WTC11 (cell line): ENCODE measurements at regions of chr16 and their contacts with region 1.

Region 1: GRCh38 chr16:12228602-12229499 is 252.3 kb downstream of the SNX29 start:
- DNase-seq: peak; percentile 78
- ATAC-seq: peak; percentile 95
- H3K4me3 Mint-ChIP-seq: no peak overlapping the region
- H3K27ac Mint-ChIP-seq: no peak overlapping the region
- H3K4me1 Mint-ChIP-seq: peaks cover 19% of the 10 kb centered on the region
- H3K27me3 Mint-ChIP-seq: no peaks in the 10 kb centered on the region
- CTCF ChIP-seq: peak; percentile 54; the same call in 1 of the 2 replicates

Region 2: DNA sequence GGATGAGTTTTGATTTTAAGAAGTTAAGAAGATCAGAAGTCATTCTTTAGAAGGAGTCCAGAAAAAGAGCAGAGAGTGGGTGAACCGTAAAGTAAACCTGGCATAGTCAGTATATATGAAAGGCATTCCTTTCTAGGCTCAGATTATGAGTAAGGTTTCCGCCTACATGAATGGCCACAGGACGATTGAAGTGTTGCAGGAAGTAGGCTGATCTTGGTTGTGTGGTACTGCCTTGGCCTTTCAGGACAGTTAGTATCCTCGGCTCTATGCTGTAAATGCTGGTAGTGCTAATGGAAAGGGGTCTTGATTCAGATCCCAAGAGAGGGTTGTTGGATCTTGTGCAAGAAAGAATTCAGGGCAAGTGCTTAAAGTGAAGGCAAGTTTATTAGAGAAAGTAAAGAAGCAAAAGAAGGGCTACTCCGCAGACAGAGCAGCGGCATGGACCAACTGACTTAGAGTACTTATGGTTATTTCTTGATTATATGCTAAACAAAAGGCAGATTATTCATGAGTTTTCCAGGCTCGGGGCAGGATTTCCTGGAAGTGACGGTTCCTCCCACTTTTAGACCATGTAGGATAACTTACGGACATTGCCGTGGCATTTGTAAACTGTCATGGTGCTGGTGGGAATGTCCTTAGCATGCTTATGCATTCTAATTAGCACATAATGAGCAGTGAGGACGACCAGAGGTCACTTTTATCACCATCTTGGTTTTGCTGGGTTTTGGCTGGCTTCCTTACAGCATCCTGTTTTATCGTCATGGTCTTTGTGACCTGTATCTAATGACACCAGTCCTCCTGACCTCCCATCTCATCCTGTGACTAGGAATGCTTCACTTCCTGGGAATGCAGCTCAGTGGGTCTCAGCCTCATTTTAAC is 87.5 kb before region 1 on chr16:
- CTCF ChIA-PET with region 1: no interaction called
- POLR2A ChIA-PET with region 1: interaction called, 11 read pairs
- DNase-seq: no peak
- ATAC-seq: no peak
- H3K4me3 Mint-ChIP-seq: no peak overlapping the region
- H3K27ac Mint-ChIP-seq: no peak overlapping the region
- H3K4me1 Mint-ChIP-seq: peaks cover 16% of the 10 kb centered on the region
- H3K27me3 Mint-ChIP-seq: no peaks in the 10 kb centered on the region
- CTCF ChIP-seq: no peak

Region 3: GRCh38 chr16:12188935-12189249 is 40.0 kb before region 1 on chr16:
- CTCF ChIA-PET with region 1: interaction called, 10 read pairs
- POLR2A ChIA-PET with region 1: no interaction called
- DNase-seq: no peak
- ATAC-seq: no peak
- H3K4me3 Mint-ChIP-seq: no peak overlapping the region
- H3K27ac Mint-ChIP-seq: no peak overlapping the region
- H3K4me1 Mint-ChIP-seq: peaks cover 14% of the 10 kb centered on the region
- H3K27me3 Mint-ChIP-seq: no peaks in the 10 kb centered on the region
- CTCF ChIP-seq: no peak

Region 4: DNA sequence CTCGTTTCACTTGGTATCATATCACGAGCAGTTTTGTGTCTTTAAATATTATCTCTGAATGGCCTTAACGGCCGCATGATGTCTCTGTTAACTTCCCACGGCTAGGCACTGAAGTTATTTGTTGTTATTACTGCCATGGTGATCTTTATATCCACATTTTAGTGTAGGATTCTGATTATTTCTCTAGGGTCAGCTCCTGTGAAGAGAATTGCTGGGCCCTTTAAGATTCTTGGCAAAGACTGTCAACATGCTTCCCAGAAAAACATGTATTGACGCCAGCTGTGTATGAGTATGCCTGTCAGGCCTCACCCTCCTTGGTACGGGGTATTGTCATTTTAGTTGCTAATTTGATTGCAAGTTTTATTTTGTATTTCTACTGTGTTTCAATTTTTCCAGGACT is 11.2 kb after region 1 on chr16:
- CTCF ChIA-PET with region 1: interaction called, 18 read pairs
- POLR2A ChIA-PET with region 1: no interaction called
- DNase-seq: no peak
- ATAC-seq: no peak
- H3K4me3 Mint-ChIP-seq: no peak overlapping the region
- H3K27ac Mint-ChIP-seq: no peak overlapping the region
- H3K4me1 Mint-ChIP-seq: no peaks in the 10 kb centered on the region
- H3K27me3 Mint-ChIP-seq: no peaks in the 10 kb centered on the region
- CTCF ChIP-seq: no peak

Region 5: GRCh38 chr16:12271006-12271405 is 42.2 kb after region 1 on chr16:
- CTCF ChIA-PET with region 1: interaction called, 31 read pairs
- POLR2A ChIA-PET with region 1: no interaction called
- DNase-seq: peak; percentile 62
- ATAC-seq: peak; percentile 99
- H3K4me3 Mint-ChIP-seq: no peak overlapping the region
- H3K27ac Mint-ChIP-seq: no peak overlapping the region
- H3K4me1 Mint-ChIP-seq: no peaks in the 10 kb centered on the region
- H3K27me3 Mint-ChIP-seq: no peaks in the 10 kb centered on the region
- CTCF ChIP-seq: no peak